CD4-positive, alpha-beta memory T cell (primary cell): ENCODE measurements at regions of chr1 and their contacts with region 1.

Region 1: DNA sequence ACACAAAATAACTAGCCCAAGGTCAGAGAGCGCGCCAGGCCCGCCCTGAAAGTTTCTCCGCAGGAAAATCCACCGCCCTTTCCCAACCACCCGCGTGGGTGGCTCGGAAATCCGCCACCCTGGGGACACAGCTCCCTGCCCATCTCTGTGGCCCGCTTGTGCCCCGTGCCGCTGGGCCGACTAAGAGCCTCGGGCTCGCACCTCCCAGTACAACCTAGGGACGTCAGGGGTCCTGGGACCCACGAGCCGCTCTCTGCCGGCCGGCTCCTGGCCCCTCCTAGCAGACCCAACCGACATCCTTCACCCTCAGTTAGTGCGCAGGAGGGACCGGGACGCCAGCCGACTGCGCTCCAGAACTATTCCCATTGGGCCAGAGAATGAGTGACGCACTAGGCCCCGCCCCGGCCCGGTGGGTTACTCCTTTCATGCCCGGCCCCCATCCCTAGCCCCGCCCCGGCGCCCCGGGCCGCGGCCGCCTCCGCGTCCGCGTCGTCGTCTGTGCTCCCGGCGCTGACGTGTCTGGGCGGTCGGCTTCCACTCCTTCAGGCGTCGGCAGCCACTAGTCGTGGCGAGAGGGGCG is 395 bp upstream of the UAP1 start:
- DNase-seq: peak; percentile 97 to 98 (median 98)
- H3K4me3 ChIP-seq: peak overlapping the region; percentile 63 to 95
- H3K4me3 Mint-ChIP-seq: peak overlapping the region; percentile 93 to 97 (median 96)
- H3K27ac ChIP-seq: peak overlapping the region; percentile 85
- H3K27ac Mint-ChIP-seq: peak overlapping the region; percentile 97 to 99 (median 98)
- H3K4me1 ChIP-seq: peaks cover 19% of the 10 kb centered on the region
- H3K4me1 Mint-ChIP-seq: peaks cover 17 to 48% (median 30%) of the 10 kb centered on the region in 4 donors
- H3K27me3 ChIP-seq: no peaks in the 10 kb centered on the region
- H3K27me3 Mint-ChIP-seq: no peaks in the 10 kb centered on the region

Region 2: DNA sequence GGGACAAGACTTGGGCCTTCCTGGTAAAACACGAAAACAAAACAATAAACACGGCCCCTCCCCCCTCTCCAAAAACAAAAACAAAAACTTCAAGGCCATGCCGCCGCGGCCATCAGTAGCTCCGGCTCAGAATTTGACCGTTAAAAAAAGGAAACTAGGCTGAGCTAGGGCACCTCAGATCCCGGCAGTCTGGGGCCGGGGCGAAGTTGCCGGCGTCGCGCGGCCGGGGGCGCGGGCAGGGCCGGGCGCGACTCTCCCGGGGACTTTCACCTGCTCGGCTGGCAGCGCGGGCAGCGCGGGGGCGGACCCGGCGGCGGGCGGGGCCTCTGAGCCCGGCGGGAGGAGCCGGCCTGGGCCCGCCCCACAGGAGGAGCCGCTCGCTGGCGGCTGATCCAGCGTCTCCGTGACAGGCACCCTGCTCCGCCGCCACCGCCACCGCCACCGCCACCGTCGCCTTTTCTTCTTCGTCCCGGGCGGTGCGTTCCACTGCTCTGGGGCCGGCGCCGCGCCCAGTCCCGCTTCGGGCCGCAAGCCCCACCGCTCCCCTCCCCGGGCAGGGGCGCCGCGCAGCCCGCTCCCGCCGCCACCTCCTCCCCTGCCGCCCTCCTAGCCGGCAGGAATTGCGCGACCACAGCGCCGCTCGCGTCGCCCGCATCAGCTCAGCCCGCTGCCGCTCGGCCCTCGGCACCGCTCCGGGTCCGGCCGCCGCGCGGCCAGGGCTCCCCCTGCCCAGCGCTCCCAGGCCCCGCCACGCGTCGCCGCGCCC is 491.6 kb before region 1 on chr1 and contains the start of gene NOS1AP:
- CTCF ChIA-PET with region 1: no interaction called
- POLR2A ChIA-PET with region 1: no interaction called
- intact Hi-C with region 1: loop called (anchors 2 kb)
- DNase-seq: peak; percentile 65 to 73 (median 70)
- H3K4me3 ChIP-seq: peak within 1 kb of the TSS in 1 of 2 donors; percentile 40
- H3K4me3 Mint-ChIP-seq: peak within 1 kb of the TSS; percentile 80 to 87 (median 84)
- H3K27ac ChIP-seq: no peak within 1 kb of the TSS
- H3K27ac Mint-ChIP-seq: peak within 1 kb of the TSS in 3 of 7 donors; percentile 42 to 69 (median 49)
- H3K4me1 ChIP-seq: peaks cover 16% of the 10 kb centered on the region
- H3K4me1 Mint-ChIP-seq: peaks cover 5 to 16% (median 6%) of the 10 kb centered on the region in 4 donors
- H3K27me3 ChIP-seq: peaks cover 27% of the 10 kb centered on the region
- H3K27me3 Mint-ChIP-seq: peaks cover 33 to 60% of the 10 kb centered on the region in 2 donors
- total RNA-seq, gene NOS1AP: not detected

Region 3: DNA sequence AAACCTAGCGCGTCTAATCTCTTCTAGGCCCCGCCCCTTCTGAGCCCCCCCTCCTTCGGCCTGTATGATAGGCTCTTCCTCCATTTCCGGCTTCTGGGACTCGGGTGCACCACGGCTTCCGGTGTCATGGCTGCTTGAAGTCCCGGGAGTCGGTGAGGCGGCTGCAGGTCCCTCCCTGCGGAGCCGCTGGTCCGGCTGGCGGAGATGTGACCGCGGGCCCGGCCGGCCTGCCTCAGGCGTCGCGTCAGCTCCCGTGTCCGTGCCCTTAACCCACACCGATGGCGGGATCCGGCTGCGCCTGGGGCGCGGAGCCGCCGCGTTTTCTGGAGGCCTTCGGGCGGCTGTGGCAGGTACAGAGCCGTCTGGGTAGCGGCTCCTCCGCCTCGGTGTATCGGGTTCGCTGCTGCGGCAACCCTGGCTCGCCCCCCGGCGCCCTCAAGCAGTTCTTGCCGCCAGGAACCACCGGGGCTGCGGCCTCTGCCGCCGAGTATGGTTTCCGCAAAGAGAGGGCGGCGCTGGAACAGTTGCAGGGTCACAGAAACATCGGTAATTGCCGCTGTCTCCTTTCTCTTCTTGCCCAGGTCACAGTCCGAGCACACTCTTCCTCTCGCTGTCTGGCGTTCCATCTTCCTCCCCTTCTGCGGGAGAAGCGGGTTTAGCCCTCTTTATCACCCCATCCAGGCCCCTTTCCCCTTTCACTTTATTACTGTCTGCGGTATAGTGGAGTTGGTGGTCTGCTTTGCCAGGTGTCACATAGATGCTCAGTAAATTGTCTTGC is 63.2 kb before region 1 on chr1 and contains the start of gene UHMK1:
- CTCF ChIA-PET with region 1: no interaction called
- POLR2A ChIA-PET with region 1: interaction called, 4 read pairs
- intact Hi-C with region 1: loop called (anchors 1 kb)
- DNase-seq: peak; percentile 87 to 96 (median 90)
- H3K4me3 ChIP-seq: peak within 1 kb of the TSS; percentile 18 to 67
- H3K4me3 Mint-ChIP-seq: peak within 1 kb of the TSS; percentile 89 to 98 (median 94)
- H3K27ac ChIP-seq: peak within 1 kb of the TSS; percentile 82
- H3K27ac Mint-ChIP-seq: peak within 1 kb of the TSS; percentile 91 to 98 (median 97)
- H3K4me1 ChIP-seq: peaks cover 35% of the 10 kb centered on the region
- H3K4me1 Mint-ChIP-seq: peaks cover 24 to 42% (median 33%) of the 10 kb centered on the region in 4 donors
- H3K27me3 ChIP-seq: no peaks in the 10 kb centered on the region
- H3K27me3 Mint-ChIP-seq: peaks cover 0 to under 1% of the 10 kb centered on the region in 2 donors
- total RNA-seq, gene UHMK1: 70.2 to 72.5 TPM

Region 4: DNA sequence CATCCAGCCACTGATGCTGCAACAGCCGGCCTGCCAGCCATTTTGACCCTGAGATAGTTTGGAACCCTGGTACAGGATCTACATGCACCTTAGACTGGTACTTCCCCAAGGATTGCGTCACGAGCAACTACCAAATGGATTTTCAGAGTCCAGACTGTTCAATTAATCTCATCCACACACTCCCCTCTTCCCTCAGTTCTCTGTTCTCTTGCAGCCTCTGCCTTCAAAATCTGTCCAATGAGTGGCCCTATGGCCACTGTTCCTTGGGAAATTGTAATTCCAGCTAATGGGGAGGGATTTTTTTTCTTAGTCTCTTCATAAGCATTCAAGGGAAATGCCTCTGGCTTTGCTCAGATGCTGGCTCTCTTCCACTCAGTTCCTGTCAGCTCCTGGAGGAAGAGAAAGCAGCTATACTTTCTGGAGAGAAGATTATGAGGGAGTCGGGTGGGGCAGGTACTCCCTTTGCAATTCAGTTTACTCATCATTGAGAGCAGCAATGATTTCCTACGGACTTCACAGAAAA is 19.4 kb before region 1 on chr1:
- CTCF ChIA-PET with region 1: no interaction called
- POLR2A ChIA-PET with region 1: no interaction called
- intact Hi-C with region 1: no loop called
- DNase-seq: no peak
- H3K4me3 ChIP-seq: no peak overlapping the region
- H3K4me3 Mint-ChIP-seq: no peak overlapping the region
- H3K27ac ChIP-seq: no peak overlapping the region
- H3K27ac Mint-ChIP-seq: no peak overlapping the region
- H3K4me1 ChIP-seq: no peaks in the 10 kb centered on the region
- H3K4me1 Mint-ChIP-seq: no peaks in the 10 kb centered on the region
- H3K27me3 ChIP-seq: no peaks in the 10 kb centered on the region
- H3K27me3 Mint-ChIP-seq: peaks cover 0 to 1% of the 10 kb centered on the region in 2 donors

Region 5: DNA sequence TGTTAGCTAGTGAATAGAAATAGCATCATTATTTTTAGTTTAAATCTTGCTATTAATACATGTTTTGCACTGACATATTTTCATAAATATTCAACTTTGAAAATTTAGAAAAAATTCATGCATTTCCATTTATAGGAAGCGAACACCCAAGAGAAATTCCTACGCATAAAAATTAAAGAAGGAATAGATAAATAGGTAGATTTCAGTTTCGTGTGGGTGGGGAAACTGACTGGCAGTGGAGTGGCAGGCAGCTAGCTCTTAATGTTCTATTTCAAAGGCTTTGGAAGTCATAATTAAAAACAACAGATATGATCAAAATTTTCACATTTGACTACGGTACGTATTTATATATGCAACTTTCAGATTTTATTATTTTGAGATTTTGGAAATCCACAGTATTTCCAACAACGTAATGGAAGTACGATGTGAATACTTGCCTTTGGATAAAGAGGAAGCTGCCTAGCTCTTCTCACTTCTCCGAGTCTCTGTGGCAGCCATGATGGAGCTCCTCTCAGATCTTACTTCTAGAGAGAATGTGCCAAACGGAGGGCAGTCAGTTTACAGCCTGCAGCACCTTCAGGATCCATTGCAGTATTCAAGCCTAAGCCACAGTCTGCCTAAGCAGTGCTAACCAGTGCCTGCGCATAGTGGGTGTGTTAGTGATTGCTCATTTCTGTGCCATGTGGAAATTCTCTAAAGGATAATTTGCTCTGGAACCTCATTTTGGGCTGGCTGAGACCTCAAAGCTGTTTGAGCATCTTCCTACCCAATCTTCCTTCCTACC is 445.1 kb after region 1 on chr1:
- CTCF ChIA-PET with region 1: no interaction called
- POLR2A ChIA-PET with region 1: no interaction called
- intact Hi-C with region 1: no loop called
- DNase-seq: no peak
- H3K4me3 ChIP-seq: no peak overlapping the region
- H3K4me3 Mint-ChIP-seq: no peak overlapping the region
- H3K27ac ChIP-seq: no peak overlapping the region
- H3K27ac Mint-ChIP-seq: no peak overlapping the region
- H3K4me1 ChIP-seq: no peaks in the 10 kb centered on the region
- H3K4me1 Mint-ChIP-seq: no peaks in the 10 kb centered on the region
- H3K27me3 ChIP-seq: no peaks in the 10 kb centered on the region
- H3K27me3 Mint-ChIP-seq: peaks cover 0 to 6% of the 10 kb centered on the region in 2 donors

Region 6: DNA sequence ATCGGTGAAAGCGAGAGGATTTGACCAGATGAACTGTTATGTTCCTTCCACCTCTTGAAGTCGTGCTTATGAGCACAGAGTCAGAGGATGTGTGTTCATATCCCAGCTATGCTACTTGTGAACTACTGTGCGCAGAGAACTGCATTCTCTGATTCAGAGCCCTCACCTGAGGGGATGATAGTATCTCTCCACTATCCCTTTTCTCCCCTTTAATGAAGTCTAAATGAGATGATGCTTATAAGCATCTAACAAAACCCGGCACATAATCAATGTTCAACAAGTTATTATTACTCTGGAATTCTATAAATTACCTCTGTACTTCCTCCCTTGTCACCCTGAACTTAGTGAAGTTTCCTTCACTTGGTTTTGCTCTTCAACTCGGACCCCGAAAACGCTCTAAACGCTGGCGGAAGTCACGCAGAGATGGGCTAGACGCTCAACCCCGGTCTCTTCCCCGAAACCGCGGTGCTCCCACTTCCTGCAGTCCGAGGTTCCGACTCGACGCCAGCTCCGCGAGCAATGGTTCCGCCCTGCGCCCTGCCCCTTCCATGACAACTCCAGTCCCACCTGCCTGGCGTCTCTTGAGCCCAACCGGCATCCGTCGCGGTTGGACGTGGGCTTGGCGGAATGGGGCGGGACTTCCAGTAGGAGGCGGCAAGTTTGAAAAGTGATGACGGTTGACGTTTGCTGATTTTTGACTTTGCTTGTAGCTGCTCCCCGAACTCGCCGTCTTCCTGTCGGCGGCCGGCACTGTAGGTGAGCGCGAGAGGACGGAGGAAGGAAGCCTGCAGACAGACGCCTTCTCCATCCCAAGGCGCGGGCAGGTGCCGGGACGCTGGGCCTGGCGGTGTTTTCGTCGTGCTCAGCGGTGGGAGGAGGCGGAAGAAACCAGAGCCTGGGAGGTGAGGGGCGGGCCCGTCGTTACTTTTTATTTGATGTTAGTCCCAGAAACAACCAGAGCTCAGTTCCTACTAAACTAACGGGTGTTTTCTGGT is 760.5 kb after region 1 on chr1 and contains the start of gene NUF2:
- CTCF ChIA-PET with region 1: no interaction called
- POLR2A ChIA-PET with region 1: no interaction called
- intact Hi-C with region 1: loop called (anchors 2 kb)
- DNase-seq: peak; percentile 96 to 97 (median 96)
- H3K4me3 ChIP-seq: peak within 1 kb of the TSS; percentile 75 to 78
- H3K4me3 Mint-ChIP-seq: peak within 1 kb of the TSS; percentile 94 to 99 (median 96)
- H3K27ac ChIP-seq: peak within 1 kb of the TSS; percentile 70
- H3K27ac Mint-ChIP-seq: peak within 1 kb of the TSS; percentile 94 to 99 (median 97)
- H3K4me1 ChIP-seq: peaks cover 24% of the 10 kb centered on the region
- H3K4me1 Mint-ChIP-seq: peaks cover 13 to 24% (median 21%) of the 10 kb centered on the region in 4 donors
- H3K27me3 ChIP-seq: no peaks in the 10 kb centered on the region
- H3K27me3 Mint-ChIP-seq: no peaks in the 10 kb centered on the region
- total RNA-seq, gene NUF2: 1.7 to 1.8 TPM